ENCODE measurements at regions of chr6 and their contacts with region 1.

Region 1: DNA sequence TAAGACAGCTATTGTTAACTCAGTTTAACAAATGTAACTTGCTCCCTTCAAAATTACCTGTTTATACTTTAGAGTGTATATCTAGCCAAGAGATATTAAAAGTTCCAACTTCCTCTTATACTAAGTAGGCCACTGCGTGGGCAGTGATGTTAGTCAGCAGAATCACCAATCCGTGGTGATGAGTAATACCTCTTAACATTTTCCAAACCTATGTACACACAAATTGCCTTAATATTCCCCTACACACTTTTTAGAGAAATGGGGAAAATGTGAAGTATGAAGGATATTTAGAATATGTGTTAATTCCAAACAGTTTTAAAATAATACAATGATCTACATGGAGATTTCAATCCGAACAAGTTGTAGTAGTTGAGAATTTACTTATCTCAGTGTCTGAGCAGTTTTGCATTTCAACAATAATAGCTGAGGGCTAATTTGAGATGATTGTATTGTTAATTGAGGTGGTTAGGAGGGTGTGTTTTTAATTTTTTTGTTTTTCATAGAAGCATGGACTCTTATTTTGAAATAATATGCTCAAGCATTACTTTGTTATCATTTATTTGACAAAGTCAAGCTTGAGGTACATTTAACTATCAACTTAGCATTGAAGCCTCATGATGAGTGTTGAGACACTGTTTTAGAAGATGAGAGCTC is 1111.8 kb upstream of the CITED2 start:
- DNase-seq: no peak
- H3K4me3 Mint-ChIP-seq: no peak overlapping the region
- H3K27ac Mint-ChIP-seq: no peak overlapping the region
- H3K4me1 Mint-ChIP-seq: peaks cover 19% of the 10 kb centered on the region
- H3K27me3 Mint-ChIP-seq: no peaks in the 10 kb centered on the region

Region 2: DNA sequence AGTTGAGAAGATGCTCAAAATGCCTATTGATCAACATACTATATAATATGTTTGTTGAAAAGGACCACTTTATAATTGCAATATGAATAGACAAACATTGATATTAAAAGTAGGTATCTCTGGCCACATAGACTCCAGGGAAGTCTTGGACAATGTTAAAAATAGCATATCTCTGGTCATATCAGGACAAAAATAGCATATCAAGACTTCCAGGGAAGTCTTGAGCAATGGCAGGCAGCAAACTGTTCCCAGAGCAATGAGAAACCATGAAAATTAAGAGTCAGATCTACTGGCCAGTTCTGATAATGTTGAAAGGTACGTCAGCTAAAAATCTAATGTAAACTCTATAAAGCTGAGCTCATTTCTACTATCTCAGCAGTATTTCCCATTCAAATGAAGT is 18.5 kb after region 1 on chr6:
- intact Hi-C with region 1: loop called (anchors 1 kb)
- DNase-seq: no peak
- H3K4me3 Mint-ChIP-seq: no peak overlapping the region
- H3K27ac Mint-ChIP-seq: no peak overlapping the region
- H3K4me1 Mint-ChIP-seq: no peaks in the 10 kb centered on the region
- H3K27me3 Mint-ChIP-seq: no peaks in the 10 kb centered on the region

Region 3: DNA sequence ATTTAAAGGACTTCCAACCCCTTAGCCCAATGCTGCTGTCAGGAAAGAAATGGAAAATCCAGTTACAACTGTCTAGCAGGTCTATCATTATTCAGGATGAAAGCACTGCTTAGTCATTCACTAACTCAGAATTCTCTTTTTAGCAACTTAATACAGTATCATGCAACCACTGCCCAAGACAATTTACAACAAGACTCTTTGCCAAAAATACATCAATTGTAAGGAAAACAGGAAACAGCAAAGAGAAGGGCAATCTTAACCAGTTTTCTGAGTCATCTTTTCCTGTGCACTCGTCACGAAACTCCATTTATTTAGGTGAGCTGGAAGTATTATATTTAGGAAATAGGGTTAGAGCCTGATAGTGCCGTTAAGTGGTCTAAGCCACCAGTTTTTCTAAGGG is 85.9 kb after region 1 on chr6:
- intact Hi-C with region 1: loop called (anchors 5 kb)
- DNase-seq: no peak
- H3K4me3 Mint-ChIP-seq: no peak overlapping the region
- H3K27ac Mint-ChIP-seq: peak overlapping the region; percentile 70
- H3K4me1 Mint-ChIP-seq: peaks cover 23% of the 10 kb centered on the region
- H3K27me3 Mint-ChIP-seq: peaks cover 5% of the 10 kb centered on the region

Region 4: DNA sequence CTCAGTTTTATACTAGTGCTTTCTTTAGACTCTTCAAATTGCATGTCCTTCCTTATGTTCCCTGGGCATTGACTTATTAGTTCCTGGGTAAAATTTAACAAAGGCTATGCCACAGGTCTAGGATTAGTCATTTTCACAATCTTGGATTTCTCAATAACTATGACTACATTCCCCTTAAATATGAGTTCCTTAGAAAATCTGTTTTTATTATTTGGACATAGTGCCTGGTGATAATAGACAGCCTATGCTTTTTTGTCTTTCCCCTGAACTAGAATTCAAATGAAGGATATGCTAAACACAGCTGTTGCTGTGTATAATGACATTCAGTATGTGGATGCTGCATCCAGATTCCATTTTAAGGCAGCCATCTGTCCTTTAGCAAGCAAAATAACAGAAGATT is 393.7 kb after region 1 on chr6:
- intact Hi-C with region 1: no loop called
- DNase-seq: no peak
- H3K4me3 Mint-ChIP-seq: no peak overlapping the region
- H3K27ac Mint-ChIP-seq: no peak overlapping the region
- H3K4me1 Mint-ChIP-seq: no peaks in the 10 kb centered on the region
- H3K27me3 Mint-ChIP-seq: no peaks in the 10 kb centered on the region